MCF 10A (cell line): ENCODE measurements at regions of chr16 and their contacts with region 1.

Region 1: GRCh38 chr16:70715055-70715858 is 29.4 kb upstream of the MTSS2 start:
- DNase-seq: peak; percentile 99
- H3K4me3 Mint-ChIP-seq: peak overlapping the region; percentile 60
- H3K27ac Mint-ChIP-seq: peak overlapping the region; percentile 96
- H3K4me1 Mint-ChIP-seq: peaks cover 34% of the 10 kb centered on the region
- H3K27me3 Mint-ChIP-seq: no peaks in the 10 kb centered on the region
- CTCF ChIP-seq: no peak

Region 2: DNA sequence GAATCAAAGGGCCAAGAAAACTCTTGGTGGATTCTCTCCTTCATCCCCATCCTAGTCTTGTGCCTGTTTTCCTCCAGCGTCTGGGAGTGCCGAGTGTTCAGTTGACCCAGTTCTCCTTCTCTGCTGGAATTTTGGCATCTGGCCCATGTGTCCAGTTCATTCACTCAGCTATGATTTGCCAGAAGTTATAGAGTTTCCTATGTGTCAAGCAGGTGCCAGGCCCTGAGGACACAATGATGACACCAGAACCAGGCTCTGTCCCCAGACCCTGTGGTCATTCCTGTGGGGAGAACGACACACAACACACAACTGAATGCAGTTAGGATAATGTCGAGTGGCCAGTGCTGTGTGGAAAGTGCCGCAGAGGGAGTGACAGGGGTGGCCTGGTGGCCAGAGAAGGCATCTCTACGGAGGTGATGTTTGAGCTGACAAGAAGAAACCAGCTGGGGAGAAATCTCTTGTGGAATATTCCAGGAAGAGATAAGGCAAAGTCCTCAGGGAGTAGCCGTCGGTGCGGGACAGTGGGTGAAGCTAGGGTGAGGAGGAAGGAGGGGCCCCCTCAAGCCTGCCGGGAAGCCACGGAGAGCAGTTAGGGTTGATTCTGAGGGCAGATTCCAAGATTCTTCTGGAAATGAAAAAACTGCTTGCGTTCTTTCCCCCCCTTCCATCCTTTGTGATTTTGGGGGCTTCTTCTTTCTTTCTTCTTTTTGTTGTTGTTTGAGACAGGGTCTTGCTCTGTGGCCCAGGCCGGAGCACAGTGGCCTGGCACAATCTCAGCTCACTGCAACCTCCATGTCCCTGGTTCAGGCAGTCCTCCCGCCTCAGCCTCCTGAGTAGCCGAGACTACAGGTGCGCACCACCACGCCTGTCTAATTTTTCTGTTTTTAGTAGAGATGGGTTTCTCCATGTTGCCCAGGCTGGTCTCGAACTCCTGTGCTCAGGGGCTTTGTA is 104.7 kb before region 1 on chr16:
- CTCF ChIA-PET with region 1: no interaction called
- POLR2A ChIA-PET with region 1: no interaction called
- intact Hi-C with region 1: no loop called
- DNase-seq: no peak
- H3K4me3 Mint-ChIP-seq: no peak overlapping the region
- H3K27ac Mint-ChIP-seq: no peak overlapping the region
- H3K4me1 Mint-ChIP-seq: no peaks in the 10 kb centered on the region
- H3K27me3 Mint-ChIP-seq: no peaks in the 10 kb centered on the region
- CTCF ChIP-seq: no peak

Region 3: DNA sequence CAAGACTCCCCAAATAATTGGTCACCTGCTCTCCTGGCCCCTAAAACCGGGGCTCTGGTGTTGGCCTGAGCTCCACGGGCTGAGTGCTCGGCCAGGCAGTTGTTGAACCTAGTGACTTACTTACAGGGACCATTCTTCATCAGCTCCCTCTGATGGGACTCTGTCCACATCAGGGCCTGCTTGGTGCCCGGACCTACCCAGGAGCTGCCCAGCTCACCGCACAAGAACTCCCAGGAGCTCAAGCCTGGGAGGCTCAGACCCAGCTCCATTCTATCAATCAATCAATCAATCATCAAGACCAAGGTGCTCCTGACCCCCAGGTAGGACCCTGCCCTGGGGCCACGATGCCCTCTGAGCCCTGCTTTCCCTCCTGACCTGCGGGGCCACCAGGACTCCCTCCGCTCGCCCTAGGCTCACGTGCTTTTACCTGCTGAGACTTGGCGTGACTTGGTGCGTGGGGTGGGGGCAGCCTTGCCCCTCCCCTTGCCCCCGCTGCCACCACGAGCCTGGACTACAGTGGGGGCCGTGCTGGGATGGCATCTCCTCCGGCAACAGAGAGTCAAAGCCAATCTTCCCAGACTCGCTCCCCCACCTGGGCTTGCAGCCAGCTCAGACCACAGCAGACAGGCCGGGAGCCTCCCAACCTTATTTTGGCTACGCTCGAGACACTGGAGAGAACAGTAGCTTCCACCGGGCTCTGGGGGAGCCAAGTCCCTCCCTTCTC is 53.2 kb before region 1 on chr16:
- CTCF ChIA-PET with region 1: no interaction called
- POLR2A ChIA-PET with region 1: no interaction called
- intact Hi-C with region 1: no loop called
- DNase-seq: no peak
- H3K4me3 Mint-ChIP-seq: no peak overlapping the region
- H3K27ac Mint-ChIP-seq: no peak overlapping the region
- H3K4me1 Mint-ChIP-seq: no peaks in the 10 kb centered on the region
- H3K27me3 Mint-ChIP-seq: no peaks in the 10 kb centered on the region
- CTCF ChIP-seq: no peak

Region 4: GRCh38 chr16:70685938-70686375 is 29.3 kb before region 1 on chr16 and contains the start of gene MTSS2:
- CTCF ChIA-PET with region 1: interaction called, 7 read pairs
- POLR2A ChIA-PET with region 1: interaction called, 12 read pairs
- intact Hi-C with region 1: loop called (anchors 1 kb)
- DNase-seq: peak; percentile 77
- H3K4me3 Mint-ChIP-seq: peak within 1 kb of the TSS; percentile 76
- H3K27ac Mint-ChIP-seq: peak within 1 kb of the TSS; percentile 75
- H3K4me1 Mint-ChIP-seq: peaks cover 37% of the 10 kb centered on the region
- H3K27me3 Mint-ChIP-seq: no peaks in the 10 kb centered on the region
- CTCF ChIP-seq: no peak
- total RNA-seq, gene MTSS2: 75.8 and 78.7 TPM in 2 replicates

Region 5: DNA sequence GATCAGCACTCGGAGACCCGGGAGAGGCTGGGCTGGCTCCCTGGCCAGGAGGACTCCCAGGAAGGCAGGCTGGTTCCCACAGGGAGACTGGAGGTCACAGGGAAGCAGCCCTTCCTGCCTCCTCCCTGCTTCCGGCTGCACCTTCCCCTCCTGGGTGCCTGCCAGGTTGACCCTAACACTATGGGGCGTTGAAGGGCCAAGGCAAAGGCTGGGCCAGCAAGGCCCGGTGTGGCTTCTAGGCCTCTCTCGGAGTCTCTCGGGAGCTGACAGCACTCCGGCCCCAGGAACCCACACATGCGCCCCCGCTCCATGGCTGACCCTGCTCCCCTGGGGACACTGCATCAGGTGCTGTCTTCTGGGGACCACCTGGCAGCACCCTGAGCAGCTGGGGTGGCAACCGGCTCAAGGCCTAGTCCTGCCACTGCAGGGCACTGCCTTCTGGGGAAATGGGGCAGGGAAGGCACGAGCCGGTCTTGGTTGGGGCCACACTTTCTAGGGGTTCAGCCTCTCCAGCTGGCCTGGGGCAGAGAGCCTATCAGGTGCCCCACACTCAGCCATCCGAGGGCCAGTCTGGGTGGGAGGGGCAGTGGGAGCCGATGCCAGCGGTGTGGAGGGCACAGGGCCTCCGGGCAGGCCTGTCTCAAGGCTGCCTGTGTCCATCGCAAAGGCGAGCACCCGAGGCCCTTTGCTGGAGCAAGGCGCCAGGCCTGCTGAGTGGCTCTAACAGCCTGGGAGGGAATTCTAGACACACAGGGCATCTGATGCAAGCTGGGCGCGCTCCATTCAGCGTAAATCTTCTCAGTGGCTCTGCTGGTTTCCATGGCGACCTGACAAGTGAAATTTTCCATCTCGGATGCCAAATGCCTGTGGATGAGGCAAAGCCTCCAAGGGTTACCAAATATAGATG is 23.8 kb before region 1 on chr16:
- CTCF ChIA-PET with region 1: interaction called, 10 read pairs
- POLR2A ChIA-PET with region 1: interaction called, 20 read pairs
- intact Hi-C with region 1: loop called (anchors 1 kb)
- DNase-seq: no peak
- H3K4me3 Mint-ChIP-seq: no peak overlapping the region
- H3K27ac Mint-ChIP-seq: no peak overlapping the region
- H3K4me1 Mint-ChIP-seq: peaks cover 63% of the 10 kb centered on the region
- H3K27me3 Mint-ChIP-seq: no peaks in the 10 kb centered on the region
- CTCF ChIP-seq: no peak

Region 6: GRCh38 chr16:70703041-70703834 is 12.0 kb before region 1 on chr16:
- CTCF ChIA-PET with region 1: interaction called, 10 read pairs
- POLR2A ChIA-PET with region 1: interaction called, 18 read pairs
- intact Hi-C with region 1: no loop called
- DNase-seq: no peak
- H3K4me3 Mint-ChIP-seq: no peak overlapping the region
- H3K27ac Mint-ChIP-seq: no peak overlapping the region
- H3K4me1 Mint-ChIP-seq: peaks cover 39% of the 10 kb centered on the region
- H3K27me3 Mint-ChIP-seq: no peaks in the 10 kb centered on the region
- CTCF ChIP-seq: no peak

Region 7: DNA sequence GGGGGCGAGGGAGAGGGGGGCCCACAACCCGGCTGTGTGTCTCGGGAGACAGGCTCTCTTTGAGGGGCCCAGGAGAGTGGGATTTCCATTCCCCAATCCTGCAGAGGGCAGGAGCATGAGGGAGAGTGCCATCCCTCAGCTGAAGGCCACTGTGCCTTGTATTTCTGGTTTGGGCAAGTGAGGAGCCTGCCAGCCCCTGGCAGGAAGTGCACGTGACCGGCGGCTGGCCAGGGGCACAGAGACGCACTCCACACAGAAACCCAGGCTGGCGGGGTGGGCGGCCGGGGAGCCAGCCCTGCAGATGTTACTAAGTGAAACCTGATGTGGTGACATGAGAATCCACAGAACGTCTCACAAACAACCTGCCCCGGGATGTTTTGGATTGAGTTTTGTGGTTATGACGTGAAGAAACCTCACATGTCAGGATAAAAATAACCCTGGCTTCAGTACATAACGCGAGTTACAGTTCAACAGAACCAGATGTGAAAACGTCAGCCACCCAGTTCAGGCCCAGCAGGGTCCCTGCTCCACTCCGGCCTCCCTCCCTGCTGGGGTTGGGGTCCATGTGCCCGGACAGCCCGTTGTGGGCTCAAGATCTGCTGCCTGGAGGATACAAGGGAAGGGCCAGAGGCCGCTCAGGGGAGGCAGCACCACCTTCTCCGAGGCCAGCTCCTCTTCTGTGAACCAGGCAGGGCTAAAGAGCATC is 22.3 kb after region 1 on chr16:
- CTCF ChIA-PET with region 1: interaction called, 11 read pairs
- POLR2A ChIA-PET with region 1: no interaction called
- intact Hi-C with region 1: loop called (anchors 2 kb)
- DNase-seq: no peak
- H3K4me3 Mint-ChIP-seq: no peak overlapping the region
- H3K27ac Mint-ChIP-seq: no peak overlapping the region
- H3K4me1 Mint-ChIP-seq: no peaks in the 10 kb centered on the region
- H3K27me3 Mint-ChIP-seq: no peaks in the 10 kb centered on the region
- CTCF ChIP-seq: no peak

Region 8: DNA sequence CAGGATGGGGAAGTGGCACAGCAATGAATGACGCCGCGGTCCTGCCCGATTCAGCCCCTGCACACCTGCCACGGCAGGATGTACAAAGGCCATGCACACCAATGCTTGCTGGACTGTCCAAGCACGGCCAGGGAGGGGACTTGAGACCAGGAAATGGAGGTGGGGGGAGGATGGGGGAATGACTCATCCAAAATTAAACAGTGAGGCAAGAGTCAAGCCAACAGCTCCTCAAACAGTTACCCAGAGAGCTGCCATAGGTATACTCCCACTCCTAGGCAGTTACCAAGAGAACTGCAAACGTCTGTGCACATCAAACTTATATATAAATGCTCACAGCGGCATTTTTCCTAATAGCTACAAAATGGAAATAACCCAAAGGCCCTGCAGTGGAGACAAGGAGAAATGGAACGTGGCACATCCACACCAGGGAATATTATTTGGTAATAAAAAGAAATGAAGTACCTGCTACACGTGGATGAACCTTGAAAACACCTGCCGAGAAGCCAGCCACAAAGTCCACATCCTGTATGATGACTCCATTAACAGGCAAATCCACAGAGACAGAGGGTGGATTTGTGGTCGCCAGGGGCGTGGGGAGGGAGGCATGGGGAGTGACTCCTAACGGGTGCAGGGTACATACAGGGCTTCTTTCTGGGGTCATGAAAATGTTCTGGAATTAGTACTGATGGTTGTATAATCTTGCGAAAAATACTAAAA is 31.6 kb after region 1 on chr16:
- CTCF ChIA-PET with region 1: interaction called, 4 read pairs
- POLR2A ChIA-PET with region 1: interaction called, 16 read pairs
- intact Hi-C with region 1: no loop called
- DNase-seq: peak; percentile 96
- H3K4me3 Mint-ChIP-seq: peak overlapping the region; percentile 22
- H3K27ac Mint-ChIP-seq: peak overlapping the region; percentile 44
- H3K4me1 Mint-ChIP-seq: peaks cover 32% of the 10 kb centered on the region
- H3K27me3 Mint-ChIP-seq: no peaks in the 10 kb centered on the region
- CTCF ChIP-seq: no peak

Region 9: DNA sequence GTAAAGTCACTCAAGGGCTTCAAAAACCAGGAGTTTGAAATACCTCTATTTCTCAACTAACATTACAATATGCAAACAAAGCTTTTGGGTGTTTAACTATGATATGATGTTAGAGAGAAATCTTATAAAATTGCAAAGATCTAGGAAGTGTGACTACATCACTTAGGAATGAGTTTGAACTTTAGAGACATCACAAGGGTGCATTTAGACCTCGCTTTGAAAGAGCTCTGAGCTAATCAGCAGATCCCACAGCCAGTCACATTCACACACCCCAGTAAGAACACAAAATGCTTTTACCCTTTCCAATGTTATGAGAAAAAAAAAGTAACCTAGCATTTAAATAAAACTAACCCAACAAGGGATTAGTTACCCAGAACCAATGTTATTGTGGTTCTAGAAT is 470.1 kb after region 1 on chr16:
- CTCF ChIA-PET with region 1: no interaction called
- POLR2A ChIA-PET with region 1: no interaction called
- intact Hi-C with region 1: no loop called
- DNase-seq: no peak
- H3K4me3 Mint-ChIP-seq: no peak overlapping the region
- H3K27ac Mint-ChIP-seq: no peak overlapping the region
- H3K4me1 Mint-ChIP-seq: no peaks in the 10 kb centered on the region
- H3K27me3 Mint-ChIP-seq: peaks cover 55% of the 10 kb centered on the region
- CTCF ChIP-seq: no peak